Activated CD8-positive, alpha-beta T cell treated with anti-CD3 and anti-CD28 coated beads, Interleukin-2, amount 10 ng/mL, durations not matched to agents 7 days and 5 days (primary cell): ENCODE measurements at regions of chr17 and their contacts with region 1.

Region 1: GRCh38 chr17:18960803-18961511 is 9.0 kb downstream of the SLC5A10 start:
- DNase-seq: peak; percentile 85
- ATAC-seq: peak; percentile 96
- H3K4me3 Mint-ChIP-seq: no peak overlapping the region
- H3K27ac Mint-ChIP-seq: no peak overlapping the region
- H3K4me1 Mint-ChIP-seq: peaks cover 11% of the 10 kb centered on the region
- H3K27me3 Mint-ChIP-seq: no peaks in the 10 kb centered on the region

Region 2: GRCh38 chr17:18857864-18858566 is 102.9 kb before region 1 on chr17 and contains the start of gene PRPSAP2:
- CTCF ChIA-PET with region 1: interaction called, 12 read pairs
- POLR2A ChIA-PET with region 1: interaction called, 3 read pairs
- DNase-seq: peak; percentile 95
- ATAC-seq: peak; percentile 79
- H3K4me3 Mint-ChIP-seq: peak within 1 kb of the TSS; percentile 89
- H3K27ac Mint-ChIP-seq: peak within 1 kb of the TSS; percentile 85
- H3K4me1 Mint-ChIP-seq: peaks cover 53% of the 10 kb centered on the region
- H3K27me3 Mint-ChIP-seq: no peaks in the 10 kb centered on the region
- total RNA-seq, gene PRPSAP2: 57.3 to 57.8 TPM

Region 3: DNA sequence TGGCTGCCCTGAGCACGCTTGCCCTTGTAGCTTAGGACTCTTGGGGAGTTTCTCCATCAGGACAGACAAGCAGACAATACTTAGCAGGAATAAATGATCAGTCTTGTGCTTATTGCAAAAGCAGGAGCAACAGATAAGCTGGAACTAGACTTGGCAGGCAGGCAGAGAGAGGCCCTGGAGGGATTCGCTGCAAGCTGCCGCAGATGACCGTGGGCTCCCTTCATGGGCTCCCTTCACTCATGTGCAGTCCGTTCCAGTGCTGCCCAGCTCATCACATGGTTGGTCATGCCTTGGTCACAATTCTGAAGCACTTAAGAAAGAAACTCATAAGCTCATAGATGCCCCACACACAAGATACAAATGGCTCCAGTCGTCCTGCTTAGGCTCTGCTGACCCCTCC is 11.4 kb before region 1 on chr17:
- CTCF ChIA-PET with region 1: interaction called, 20 read pairs
- POLR2A ChIA-PET with region 1: interaction called, 4 read pairs
- DNase-seq: no peak
- ATAC-seq: no peak
- H3K4me3 Mint-ChIP-seq: no peak overlapping the region
- H3K27ac Mint-ChIP-seq: no peak overlapping the region
- H3K4me1 Mint-ChIP-seq: peaks cover 8% of the 10 kb centered on the region
- H3K27me3 Mint-ChIP-seq: peaks cover 7% of the 10 kb centered on the region

Region 4: GRCh38 chr17:18997650-18998196 is 36.8 kb after region 1 on chr17:
- CTCF ChIA-PET with region 1: interaction called, 17 read pairs
- POLR2A ChIA-PET with region 1: no interaction called
- DNase-seq: no peak
- ATAC-seq: no peak
- H3K4me3 Mint-ChIP-seq: no peak overlapping the region
- H3K27ac Mint-ChIP-seq: no peak overlapping the region
- H3K4me1 Mint-ChIP-seq: peaks cover 26% of the 10 kb centered on the region
- H3K27me3 Mint-ChIP-seq: no peaks in the 10 kb centered on the region

Region 5: GRCh38 chr17:19024101-19025078 is 63.4 kb after region 1 on chr17:
- CTCF ChIA-PET with region 1: interaction called, 21 read pairs
- POLR2A ChIA-PET with region 1: no interaction called
- DNase-seq: peak; percentile 35
- ATAC-seq: peak; percentile 38
- H3K4me3 Mint-ChIP-seq: no peak overlapping the region
- H3K27ac Mint-ChIP-seq: peak overlapping the region; percentile 63
- H3K4me1 Mint-ChIP-seq: peaks cover 15% of the 10 kb centered on the region
- H3K27me3 Mint-ChIP-seq: no peaks in the 10 kb centered on the region